ENCODE measurements at regions of chr14 and their contacts with region 1.

Region 1: GRCh38 chr14:50311975-50312733 is at the starts of genes DMAC2L and L2HGDH:
- DNase-seq: peak; percentile 92
- H3K4me3 Mint-ChIP-seq: peak within 1 kb of the TSS; percentile 92
- H3K27ac Mint-ChIP-seq: peak within 1 kb of the TSS; percentile 99
- H3K4me1 Mint-ChIP-seq: peaks cover 46% of the 10 kb centered on the region
- H3K27me3 Mint-ChIP-seq: peaks cover 2% of the 10 kb centered on the region
- total RNA-seq, gene DMAC2L: 14.4 and 17.9 TPM in 2 replicates
- total RNA-seq, gene L2HGDH: 14.7 and 16.2 TPM in 2 replicates

Region 2: DNA sequence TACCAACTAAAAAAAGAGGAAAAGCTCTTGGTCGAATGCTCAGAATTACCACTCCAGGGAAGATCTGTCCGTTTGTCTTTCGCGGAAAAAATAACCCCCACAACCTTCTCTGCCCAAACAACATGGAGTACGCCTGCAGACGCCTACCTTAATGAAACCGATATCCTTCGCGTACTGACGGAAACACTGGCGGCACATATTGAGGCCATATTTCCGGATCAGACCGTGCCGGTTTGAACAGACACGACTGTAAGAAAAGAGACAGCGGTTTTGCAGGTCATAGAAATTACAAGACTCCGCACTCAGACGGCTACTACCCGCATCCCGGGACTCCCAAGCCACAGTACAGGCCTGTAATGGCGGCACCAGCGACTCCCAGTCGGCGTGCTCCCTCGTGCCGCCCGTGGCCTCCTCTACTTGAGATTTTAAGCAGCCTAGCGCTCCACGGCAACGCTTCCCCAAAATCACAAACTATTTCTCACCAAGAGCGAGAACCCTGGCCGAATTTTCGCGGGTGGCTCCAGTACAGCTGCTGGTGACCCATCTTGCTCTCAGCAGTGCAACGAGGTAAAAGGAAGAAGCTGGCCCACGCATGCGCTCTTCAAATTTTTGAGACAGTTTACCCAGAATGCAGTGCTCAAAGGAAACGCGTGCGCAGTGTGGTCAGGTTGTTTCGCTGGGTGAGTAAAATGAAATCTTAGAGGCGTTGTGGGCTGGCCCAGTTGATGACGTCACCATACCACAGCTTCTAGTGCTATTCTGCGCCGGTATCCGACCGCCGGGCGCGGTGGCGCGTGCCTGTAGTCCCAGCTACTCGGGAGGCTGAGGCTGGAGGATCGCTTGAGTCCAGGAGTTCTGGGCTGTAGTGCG is 726.1 kb before region 1 on chr14 and contains the start of gene RPS29:
- intact Hi-C with region 1: loop called (anchors 5 kb)
- DNase-seq: peak; percentile 97
- H3K4me3 Mint-ChIP-seq: peak within 1 kb of the TSS; percentile 93
- H3K27ac Mint-ChIP-seq: peak within 1 kb of the TSS; percentile 99
- H3K4me1 Mint-ChIP-seq: peaks cover 46% of the 10 kb centered on the region
- H3K27me3 Mint-ChIP-seq: peaks cover 3% of the 10 kb centered on the region
- total RNA-seq, gene RPS29: 1,860 and 1,913 TPM in 2 replicates

Region 3: GRCh38 chr14:49767562-49768300 is 544.4 kb before region 1 on chr14 and contains the start of gene KLHDC2:
- intact Hi-C with region 1: loop called (anchors 1 kb)
- DNase-seq: peak; percentile 89
- H3K4me3 Mint-ChIP-seq: peak within 1 kb of the TSS; percentile 99
- H3K27ac Mint-ChIP-seq: peak within 1 kb of the TSS; percentile 100
- H3K4me1 Mint-ChIP-seq: peaks cover 33% of the 10 kb centered on the region
- H3K27me3 Mint-ChIP-seq: peaks cover 2% of the 10 kb centered on the region
- total RNA-seq, gene KLHDC2: 23.7 and 26.2 TPM in 2 replicates

Region 4: DNA sequence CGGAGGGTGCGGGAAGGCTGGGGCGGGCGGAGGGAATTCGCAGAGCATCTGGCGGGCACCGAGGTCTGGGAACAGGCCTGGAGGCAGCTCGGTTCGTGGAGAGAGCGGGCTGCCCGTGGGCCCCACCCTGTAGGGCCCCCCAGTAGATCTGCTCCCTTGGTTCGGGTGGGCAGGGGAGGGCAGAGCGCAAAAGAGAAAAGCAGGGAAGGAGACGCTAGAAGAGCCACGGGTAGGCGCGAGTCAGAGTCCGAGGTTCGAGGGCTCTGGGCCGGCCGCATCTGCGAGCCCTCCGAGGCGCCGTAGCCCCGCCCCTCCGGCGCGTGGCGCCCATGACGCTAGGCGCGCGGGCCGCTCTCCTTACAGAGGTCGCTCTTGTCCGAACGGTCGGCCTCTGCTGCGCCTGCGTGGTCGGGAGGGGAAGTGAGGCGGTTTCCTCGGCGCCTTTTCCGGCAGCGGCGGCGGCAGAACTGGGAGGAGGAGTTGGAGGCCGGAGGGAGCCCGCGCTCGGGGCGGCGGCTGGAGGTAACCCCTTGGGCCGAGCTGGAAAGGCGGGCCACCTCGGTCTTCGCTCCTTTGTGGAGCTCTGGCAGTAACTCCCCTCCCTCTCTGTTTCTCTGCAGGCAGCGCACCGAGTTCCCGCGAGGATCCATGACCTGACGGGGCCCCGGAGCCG is 419.4 kb before region 1 on chr14 and contains the start of gene ARF6:
- intact Hi-C with region 1: loop called (anchors 1 kb)
- DNase-seq: peak; percentile 97
- H3K4me3 Mint-ChIP-seq: peak within 1 kb of the TSS; percentile 99
- H3K27ac Mint-ChIP-seq: peak within 1 kb of the TSS; percentile 100
- H3K4me1 Mint-ChIP-seq: peaks cover 19% of the 10 kb centered on the region
- H3K27me3 Mint-ChIP-seq: peaks cover 2% of the 10 kb centered on the region
- total RNA-seq, gene ARF6: 163 and 164 TPM in 2 replicates

Region 5: DNA sequence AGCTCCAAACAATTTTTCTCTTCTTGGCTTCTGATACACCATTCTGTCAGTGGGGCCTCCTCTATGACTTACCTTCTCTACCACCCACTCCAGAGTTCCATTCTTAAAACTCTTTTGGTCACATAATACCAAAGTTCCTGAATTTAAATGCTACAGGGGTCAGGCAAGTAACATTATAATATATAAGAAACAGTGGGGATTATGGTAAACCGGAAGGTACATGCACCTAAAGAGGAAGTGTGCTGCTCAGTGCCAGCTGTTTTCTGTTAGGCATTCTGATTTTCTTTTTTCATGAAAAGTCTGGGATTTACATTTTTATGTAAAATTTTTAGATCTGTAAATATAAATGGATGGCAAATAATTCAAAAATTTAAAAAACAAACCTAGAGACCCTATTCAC is 120.7 kb before region 1 on chr14:
- intact Hi-C with region 1: no loop called
- DNase-seq: no peak
- H3K4me3 Mint-ChIP-seq: no peak overlapping the region
- H3K27ac Mint-ChIP-seq: no peak overlapping the region
- H3K4me1 Mint-ChIP-seq: no peaks in the 10 kb centered on the region
- H3K27me3 Mint-ChIP-seq: no peaks in the 10 kb centered on the region

Region 6: GRCh38 chr14:50263321-50263720 is 48.8 kb before region 1 on chr14:
- intact Hi-C with region 1: no loop called
- DNase-seq: no peak
- H3K4me3 Mint-ChIP-seq: no peak overlapping the region
- H3K27ac Mint-ChIP-seq: no peak overlapping the region
- H3K4me1 Mint-ChIP-seq: no peaks in the 10 kb centered on the region
- H3K27me3 Mint-ChIP-seq: no peaks in the 10 kb centered on the region

Region 7: DNA sequence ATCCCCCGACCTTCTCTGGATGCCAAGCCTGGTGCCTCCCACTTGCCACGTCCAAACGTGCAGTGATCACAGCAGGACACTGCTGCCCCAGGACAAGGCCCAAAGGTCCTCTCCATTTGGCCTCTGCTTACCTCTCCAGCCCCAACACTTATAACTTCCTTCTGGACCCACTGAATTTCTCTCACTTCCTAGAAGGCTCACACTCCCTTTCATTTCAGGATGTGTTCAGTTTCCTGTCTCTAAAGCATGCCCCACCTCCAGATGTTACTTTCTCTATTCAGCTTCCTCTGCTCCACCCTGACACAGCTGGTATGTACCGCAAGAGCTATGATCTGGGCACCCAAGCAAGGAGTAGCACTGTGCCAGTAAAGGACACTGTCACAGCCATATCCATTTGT is 51.6 kb after region 1 on chr14:
- intact Hi-C with region 1: loop called (anchors 2 kb)
- DNase-seq: peak; percentile 46
- H3K4me3 Mint-ChIP-seq: peak overlapping the region; percentile 84
- H3K27ac Mint-ChIP-seq: peak overlapping the region; percentile 94
- H3K4me1 Mint-ChIP-seq: peaks cover 27% of the 10 kb centered on the region
- H3K27me3 Mint-ChIP-seq: no peaks in the 10 kb centered on the region

Region 8: DNA sequence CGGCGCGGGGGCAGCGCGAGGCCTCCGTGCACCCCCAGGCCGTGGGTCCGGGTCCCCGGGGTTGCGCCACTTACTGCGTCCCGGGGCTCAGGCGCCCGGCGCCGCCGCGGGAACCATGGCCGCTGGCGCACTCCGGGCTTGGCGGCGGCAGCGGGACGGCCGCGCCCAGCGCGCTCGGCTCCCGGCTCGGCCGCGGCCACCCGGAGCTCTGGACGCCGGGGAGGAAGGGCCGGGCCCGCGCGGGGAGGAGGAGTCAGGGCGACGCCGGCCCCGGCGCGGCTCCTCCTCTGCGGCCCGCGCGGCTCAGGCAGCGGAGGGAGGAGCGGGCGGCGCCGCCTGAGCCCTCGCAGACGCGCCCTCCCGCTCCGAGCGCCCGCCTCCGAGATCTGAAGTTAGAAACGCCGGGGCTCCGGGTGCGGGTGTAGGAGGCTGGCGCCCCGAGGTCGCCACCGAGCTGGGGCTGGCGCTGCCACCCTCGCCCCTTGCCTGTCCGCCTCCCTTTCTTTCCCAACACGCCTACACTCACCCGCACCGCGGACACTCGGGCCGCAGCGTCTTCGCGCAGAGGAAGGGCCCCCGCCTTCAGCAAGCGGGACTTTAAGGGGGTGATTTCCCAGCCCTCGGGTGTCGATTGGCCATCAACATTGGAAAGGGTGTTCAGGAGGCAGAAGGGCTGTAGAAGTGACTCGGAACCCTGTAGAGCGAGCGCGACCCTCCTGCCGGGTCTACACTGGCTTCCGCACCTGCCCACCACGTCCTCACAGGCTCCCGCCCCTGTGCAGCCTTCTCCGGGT is 519.0 kb after region 1 on chr14 and contains the start of gene NIN:
- intact Hi-C with region 1: loop called (anchors 5 kb)
- DNase-seq: peak; percentile 73
- H3K4me3 Mint-ChIP-seq: peak within 1 kb of the TSS; percentile 93
- H3K27ac Mint-ChIP-seq: peak within 1 kb of the TSS; percentile 95
- H3K4me1 Mint-ChIP-seq: peaks cover 67% of the 10 kb centered on the region
- H3K27me3 Mint-ChIP-seq: peaks cover 16% of the 10 kb centered on the region
- total RNA-seq, gene NIN: 39.9 and 43.3 TPM in 2 replicates